BJ (cell line): ENCODE measurements at regions of chr2 and their contacts with region 1.

Region 1: DNA sequence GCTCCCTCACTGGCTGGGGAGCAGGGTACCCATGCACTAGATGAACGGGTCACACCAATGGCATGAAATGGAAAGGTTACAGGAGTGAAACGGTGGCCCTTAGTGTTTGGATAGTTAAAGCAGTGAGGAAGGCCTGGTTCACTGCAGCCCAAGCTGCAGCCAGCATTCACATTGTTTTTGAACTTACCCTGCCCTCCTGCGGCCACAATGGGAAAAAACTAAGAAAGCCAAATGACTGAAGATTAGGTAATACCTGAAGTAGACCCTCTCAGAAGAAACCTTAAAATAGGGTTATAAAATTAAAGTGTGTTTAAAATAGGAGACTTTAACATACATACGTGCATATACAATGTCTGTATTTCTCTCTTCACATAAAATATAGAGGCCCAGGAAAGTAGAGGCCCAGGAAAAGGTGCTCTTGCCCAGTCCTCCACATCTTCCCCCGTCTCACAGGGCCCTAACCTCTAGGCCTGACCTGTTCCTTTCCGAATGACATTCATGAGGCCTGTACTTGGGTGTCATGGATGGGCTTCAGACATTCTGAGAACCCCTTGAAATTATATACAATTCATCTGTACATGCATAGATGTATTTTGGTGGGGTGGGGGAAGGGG is 33.3 kb downstream of the DOK1 start:
- DNase-seq: no peak
- H3K4me3 ChIP-seq: no peak overlapping the region
- H3K27me3 ChIP-seq: peaks cover 6% of the 10 kb centered on the region; the same call in 1 of the 2 replicates
- CTCF ChIP-seq: peak; percentile 73

Region 2: DNA sequence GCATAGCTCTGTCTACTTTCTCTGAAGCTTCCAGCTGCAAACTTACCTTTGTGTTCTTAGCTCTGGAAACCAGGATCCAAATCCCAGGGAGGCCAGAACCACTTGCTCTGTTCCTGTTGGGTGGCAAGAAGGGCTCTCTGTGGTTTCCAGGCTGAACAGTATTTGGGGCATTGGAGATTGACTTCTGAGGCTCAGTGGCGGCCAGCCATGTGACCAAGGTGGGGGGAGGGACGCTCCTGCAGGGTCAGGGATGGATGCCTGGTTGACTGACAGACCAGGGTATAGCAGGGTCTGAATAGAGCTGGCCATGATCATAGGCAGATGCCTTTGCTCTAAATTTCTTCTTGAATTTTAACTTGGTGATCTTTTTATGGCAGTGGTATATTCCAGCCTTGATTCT is 259.7 kb before region 1 on chr2:
- CTCF ChIA-PET with region 1: no interaction called
- POLR2A ChIA-PET with region 1: no interaction called
- DNase-seq: no peak
- H3K4me3 ChIP-seq: no peak overlapping the region
- H3K27me3 ChIP-seq: no peaks in the 10 kb centered on the region; the same call in none of the 2 replicates
- CTCF ChIP-seq: no peak

Region 3: DNA sequence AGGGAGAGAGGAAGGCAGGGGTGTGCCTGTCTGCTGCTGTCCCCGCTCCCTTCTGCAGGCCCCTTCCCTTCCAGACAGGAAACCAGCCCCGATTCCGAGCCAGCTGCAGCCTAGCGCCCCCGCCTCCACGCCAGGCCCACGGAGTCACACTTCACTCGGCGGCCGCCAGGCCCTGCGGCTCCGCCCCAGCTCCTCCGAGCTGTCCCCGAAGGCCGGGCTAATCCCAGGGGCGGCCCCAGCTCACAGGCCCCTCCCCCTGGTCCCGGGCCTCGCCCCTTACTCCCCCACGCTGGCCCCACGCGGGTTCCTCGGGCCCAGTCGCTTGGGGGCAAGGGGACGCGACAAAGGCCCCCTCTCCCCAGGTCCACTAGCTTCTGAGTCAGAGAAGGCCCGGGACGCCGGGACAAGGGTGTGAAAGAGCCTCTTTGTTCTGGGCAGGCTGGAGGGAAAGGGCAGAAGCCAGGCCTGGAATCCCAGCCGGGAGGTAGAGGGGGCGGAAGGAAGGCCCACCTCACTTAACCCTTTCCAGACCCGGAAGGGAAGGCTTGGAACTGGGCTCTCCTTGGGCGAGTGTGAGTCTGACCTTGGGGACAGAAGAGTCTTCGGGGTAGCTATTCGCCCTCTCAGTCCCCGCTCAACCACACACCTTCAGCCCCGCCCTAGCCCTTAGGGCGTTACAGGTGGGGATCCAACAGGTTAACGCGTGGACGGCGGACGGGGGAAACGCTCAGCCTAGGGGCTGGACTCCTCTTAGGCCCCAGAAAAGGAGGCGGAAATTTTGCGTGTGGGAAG is 147.2 kb before region 1 on chr2:
- CTCF ChIA-PET with region 1: interaction called, 10 read pairs
- POLR2A ChIA-PET with region 1: no interaction called
- DNase-seq: no peak
- H3K4me3 ChIP-seq: peak overlapping the region; percentile 69
- H3K27me3 ChIP-seq: peaks cover 10% of the 10 kb centered on the region
- CTCF ChIP-seq: peak; percentile 31; the same call in 1 of the 2 replicates

Region 4: DNA sequence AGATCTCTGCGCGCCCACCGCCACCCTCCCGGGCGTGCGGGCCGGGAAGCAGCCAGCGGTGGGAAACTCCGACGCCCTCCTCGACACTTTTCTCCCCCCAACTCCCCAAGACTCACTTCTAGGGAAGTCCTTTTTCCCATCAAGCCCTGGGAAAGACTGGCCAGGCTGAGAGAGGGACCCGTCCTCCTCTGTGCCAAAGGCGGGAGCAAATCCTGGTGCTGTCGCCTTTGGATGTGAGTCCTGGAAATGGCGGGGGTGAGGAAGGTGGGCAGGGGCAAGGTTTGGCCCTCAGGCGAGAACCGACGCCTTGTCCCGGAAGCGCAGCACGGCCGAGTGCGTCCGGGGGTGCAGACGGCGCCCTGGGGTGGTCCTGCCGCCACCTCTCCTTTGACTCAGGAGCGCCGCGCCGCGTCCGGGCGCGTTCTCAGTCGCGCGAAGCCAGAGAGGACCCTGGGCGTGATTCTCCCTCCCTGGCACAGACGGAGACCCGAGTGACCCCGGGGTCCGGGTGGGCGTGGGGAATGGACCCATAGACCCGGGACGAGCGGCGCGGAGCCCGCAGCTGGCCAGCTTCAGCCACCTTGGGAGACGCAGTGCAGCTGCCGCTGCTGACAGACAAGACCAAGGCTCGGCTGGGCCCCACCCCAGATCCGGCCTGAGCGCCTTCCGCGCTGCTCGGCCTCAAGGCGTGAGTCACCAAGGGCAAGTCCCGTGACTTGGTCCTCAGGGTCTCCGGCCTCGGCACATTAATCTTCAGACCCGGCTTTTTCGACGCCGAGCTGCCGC is 84.9 kb before region 1 on chr2:
- CTCF ChIA-PET with region 1: interaction called, 14 read pairs
- POLR2A ChIA-PET with region 1: no interaction called
- DNase-seq: no peak
- H3K4me3 ChIP-seq: peak overlapping the region; percentile 43
- H3K27me3 ChIP-seq: peaks cover 11% of the 10 kb centered on the region
- CTCF ChIP-seq: peak; percentile 39

Region 5: GRCh38 chr2:74538881-74539339 is 48.9 kb before region 1 on chr2:
- CTCF ChIA-PET with region 1: interaction called, 16 read pairs
- POLR2A ChIA-PET with region 1: no interaction called
- DNase-seq: no peak
- H3K4me3 ChIP-seq: no peak overlapping the region
- H3K27me3 ChIP-seq: no peaks in the 10 kb centered on the region
- CTCF ChIP-seq: no peak

Region 6: GRCh38 chr2:74566754-74567085 is 21.1 kb before region 1 on chr2:
- CTCF ChIA-PET with region 1: interaction called, 13 read pairs
- POLR2A ChIA-PET with region 1: no interaction called
- DNase-seq: peak; percentile 96
- H3K4me3 ChIP-seq: no peak overlapping the region
- H3K27me3 ChIP-seq: no peaks in the 10 kb centered on the region
- CTCF ChIP-seq: no peak

Region 7: DNA sequence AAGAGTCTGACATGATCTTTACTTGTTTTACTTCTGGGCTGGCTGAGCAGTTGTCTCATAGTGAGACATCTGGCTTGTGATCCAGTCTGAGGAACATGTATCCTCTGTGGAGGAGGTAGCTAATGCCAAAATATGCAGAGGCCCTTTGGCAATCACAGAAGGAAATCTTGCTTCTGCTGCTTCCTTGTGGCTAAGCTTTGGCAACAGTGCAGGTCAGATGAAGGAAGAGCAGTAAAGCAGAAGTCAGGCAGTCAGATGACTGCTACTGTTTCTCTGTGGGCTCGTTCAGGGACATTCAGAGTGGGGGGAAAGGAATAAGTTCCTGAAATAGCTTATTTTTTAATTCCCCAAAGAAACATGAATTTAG is 10.9 kb before region 1 on chr2:
- CTCF ChIA-PET with region 1: interaction called, 49 read pairs
- POLR2A ChIA-PET with region 1: interaction called, 5 read pairs
- DNase-seq: peak; percentile 83
- H3K4me3 ChIP-seq: no peak overlapping the region
- H3K27me3 ChIP-seq: no peaks in the 10 kb centered on the region
- CTCF ChIP-seq: peak; percentile 40

Region 8: GRCh38 chr2:74602586-74603281 is 15.0 kb after region 1 on chr2:
- CTCF ChIA-PET with region 1: interaction called, 50 read pairs
- POLR2A ChIA-PET with region 1: no interaction called
- DNase-seq: peak; percentile 41
- H3K4me3 ChIP-seq: no peak overlapping the region
- H3K27me3 ChIP-seq: peaks cover 8% of the 10 kb centered on the region
- CTCF ChIP-seq: no peak